ENCODE measurements at regions of chr1 and their contacts with region 1.

Region 1: GRCh38 chr1:19651141-19651737 is 7.1 kb downstream of the NBL1 start:
- DNase-seq: peak; percentile 51 to 65 (median 60)
- ATAC-seq: peak; percentile 74
- H3K4me3 ChIP-seq: no peak overlapping the region
- H3K27ac ChIP-seq: peak overlapping the region in 2 of 4 donors; percentile 43 to 46
- H3K4me1 ChIP-seq: peaks cover 8% of the 10 kb centered on the region
- H3K27me3 ChIP-seq: no peaks in the 10 kb centered on the region
- CTCF ChIP-seq: peak; percentile 25 to 66 (median 60)
- POLR2A ChIP-seq: no peak

Region 2: GRCh38 chr1:19341201-19342072 is 309.8 kb before region 1 on chr1:
- intact Hi-C with region 1: loop called (anchors 5 kb)
- DNase-seq: peak; percentile 67 to 79 (median 76)
- ATAC-seq: peak; percentile 65
- H3K4me3 ChIP-seq: no peak overlapping the region
- H3K27ac ChIP-seq: no peak overlapping the region
- H3K4me1 ChIP-seq: no peaks in the 10 kb centered on the region
- H3K27me3 ChIP-seq: no peaks in the 10 kb centered on the region
- CTCF ChIP-seq: peak; percentile 75 to 83 (median 76)
- POLR2A ChIP-seq: no peak

Region 3: GRCh38 chr1:19353596-19353995 is 297.6 kb before region 1 on chr1:
- intact Hi-C with region 1: no loop called
- DNase-seq: no peak
- ATAC-seq: no peak
- H3K4me3 ChIP-seq: no peak overlapping the region
- H3K27ac ChIP-seq: no peak overlapping the region
- H3K4me1 ChIP-seq: no peaks in the 10 kb centered on the region
- H3K27me3 ChIP-seq: no peaks in the 10 kb centered on the region
- CTCF ChIP-seq: no peak
- POLR2A ChIP-seq: no peak

Region 4: DNA sequence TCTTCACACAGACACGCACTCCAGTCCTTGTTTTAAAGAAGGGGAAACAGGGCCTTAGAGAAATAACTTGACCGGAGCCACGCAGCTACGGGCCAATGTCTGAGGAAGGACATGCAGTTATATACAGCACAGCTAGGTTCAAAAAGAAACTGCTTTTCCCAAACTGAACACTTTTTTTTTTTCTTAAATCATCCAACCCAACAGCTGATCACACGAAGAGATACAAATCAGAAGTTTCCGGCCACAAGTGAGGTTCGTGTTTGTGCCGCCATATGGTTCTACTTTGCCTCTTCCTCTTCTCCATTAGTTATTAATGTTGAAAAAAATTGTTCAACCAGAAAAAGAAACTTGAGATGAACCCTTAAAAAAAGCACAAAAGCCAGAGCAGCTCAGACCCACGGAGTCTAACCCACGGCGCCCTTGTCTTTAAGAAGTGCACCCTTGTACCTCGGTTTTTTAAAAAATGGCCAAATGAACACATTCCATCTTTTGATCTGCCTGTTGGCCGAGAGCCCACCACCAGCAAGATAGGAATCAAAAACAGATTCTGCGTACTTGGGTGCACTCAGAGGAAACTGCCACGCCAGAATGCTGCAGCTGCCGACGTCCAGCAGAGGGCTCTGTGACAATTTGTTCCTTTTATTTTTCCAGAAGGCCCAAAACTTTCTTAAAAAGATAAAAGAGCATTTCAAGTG is 260.2 kb before region 1 on chr1:
- intact Hi-C with region 1: loop called (anchors 5 kb)
- DNase-seq: peak; percentile 41 to 61 (median 48)
- ATAC-seq: peak; percentile 60
- H3K4me3 ChIP-seq: no peak overlapping the region
- H3K27ac ChIP-seq: peak overlapping the region in 2 of 4 donors; percentile 38 to 59
- H3K4me1 ChIP-seq: peaks cover 12% of the 10 kb centered on the region
- H3K27me3 ChIP-seq: no peaks in the 10 kb centered on the region
- CTCF ChIP-seq: peak in 6 of 7 experiments; percentile 61 to 74 (median 66)
- POLR2A ChIP-seq: no peak

Measured in body of pancreas (tissue), 4 donors.